Activated CD4-positive, alpha-beta memory T cell treated with anti-CD3 and anti-CD28 coated beads for 36 hours (primary cell): ENCODE measurements at regions of chr4 and their contacts with region 1.

Region 1: GRCh38 chr4:6942238-6942800 is 32.7 kb downstream of the TBC1D14 start:
- DNase-seq: peak; percentile 67
- H3K4me3 Mint-ChIP-seq: peak overlapping the region; percentile 5
- H3K27ac Mint-ChIP-seq: peak overlapping the region; percentile 53
- H3K4me1 Mint-ChIP-seq: peaks cover 72% of the 10 kb centered on the region
- H3K27me3 Mint-ChIP-seq: no peaks in the 10 kb centered on the region

Region 2: GRCh38 chr4:6917461-6918271 is 24.7 kb before region 1 on chr4:
- CTCF ChIA-PET with region 1: interaction called, 11 read pairs
- POLR2A ChIA-PET with region 1: interaction called, 3 read pairs
- intact Hi-C with region 1: loop called (anchors 1 kb)
- DNase-seq: peak; percentile 62
- H3K4me3 Mint-ChIP-seq: peak overlapping the region; percentile 48
- H3K27ac Mint-ChIP-seq: peak overlapping the region; percentile 91
- H3K4me1 Mint-ChIP-seq: peaks cover 77% of the 10 kb centered on the region
- H3K27me3 Mint-ChIP-seq: no peaks in the 10 kb centered on the region

Region 3: GRCh38 chr4:6926681-6927478 is 15.4 kb before region 1 on chr4:
- CTCF ChIA-PET with region 1: interaction called, 11 read pairs
- POLR2A ChIA-PET with region 1: interaction called, 11 read pairs
- intact Hi-C with region 1: loop called (anchors 1 kb)
- DNase-seq: peak; percentile 76
- H3K4me3 Mint-ChIP-seq: peak overlapping the region; percentile 57
- H3K27ac Mint-ChIP-seq: peak overlapping the region; percentile 88
- H3K4me1 Mint-ChIP-seq: peaks cover 66% of the 10 kb centered on the region
- H3K27me3 Mint-ChIP-seq: no peaks in the 10 kb centered on the region